ENCODE measurements at regions of chr14 and their contacts with region 1.

Region 1: DNA sequence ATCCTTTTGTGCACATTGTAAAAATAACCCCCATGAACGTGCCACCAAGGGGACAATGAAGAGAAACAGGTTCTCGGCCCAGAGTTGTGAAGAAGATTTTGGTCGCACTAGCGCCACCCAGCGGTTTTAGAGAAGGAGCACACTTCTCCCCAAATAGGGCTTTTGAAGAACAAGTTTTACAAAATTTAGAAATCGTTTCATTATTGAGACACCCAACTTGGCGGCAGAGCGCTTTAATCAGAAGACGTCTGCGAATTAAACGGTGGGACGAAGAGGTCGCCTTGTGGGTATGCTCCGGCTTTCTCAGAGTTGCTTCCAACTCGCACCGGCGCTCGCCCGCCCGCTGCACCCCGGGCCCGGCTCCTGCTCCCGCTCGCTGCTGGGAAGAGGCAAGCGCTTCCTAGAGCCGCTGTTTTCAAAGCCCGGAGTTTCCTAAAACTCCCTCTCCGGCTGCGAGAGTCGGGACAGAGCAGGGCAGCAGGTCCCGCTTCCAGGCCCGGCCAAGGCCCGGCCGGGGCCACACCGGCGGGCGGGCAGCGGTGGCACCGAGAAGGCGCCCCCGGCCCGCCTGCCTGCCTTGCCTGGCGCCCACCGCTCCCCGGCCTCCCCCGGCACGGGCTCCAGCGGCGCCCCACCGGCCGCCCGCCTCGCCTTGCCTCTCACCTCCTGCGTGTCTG is 673 bp downstream of the FOXA1 start:
- DNase-seq: peak; percentile 91
- H3K4me3 ChIP-seq: peak overlapping the region; percentile 54
- H3K27ac ChIP-seq: peak overlapping the region; percentile 91
- H3K4me1 ChIP-seq: no peaks in the 10 kb centered on the region
- H3K27me3 ChIP-seq: peaks cover 33% of the 10 kb centered on the region
- CTCF ChIP-seq: peak; percentile 70

Region 2: GRCh38 chr14:37246427-37246914 is 347.9 kb before region 1 on chr14:
- intact Hi-C with region 1: loop called (anchors 5 kb)
- DNase-seq: no peak
- H3K4me3 ChIP-seq: no peak overlapping the region
- H3K27ac ChIP-seq: no peak overlapping the region
- H3K4me1 ChIP-seq: no peaks in the 10 kb centered on the region
- H3K27me3 ChIP-seq: no peaks in the 10 kb centered on the region
- CTCF ChIP-seq: peak; percentile 75

Region 3: DNA sequence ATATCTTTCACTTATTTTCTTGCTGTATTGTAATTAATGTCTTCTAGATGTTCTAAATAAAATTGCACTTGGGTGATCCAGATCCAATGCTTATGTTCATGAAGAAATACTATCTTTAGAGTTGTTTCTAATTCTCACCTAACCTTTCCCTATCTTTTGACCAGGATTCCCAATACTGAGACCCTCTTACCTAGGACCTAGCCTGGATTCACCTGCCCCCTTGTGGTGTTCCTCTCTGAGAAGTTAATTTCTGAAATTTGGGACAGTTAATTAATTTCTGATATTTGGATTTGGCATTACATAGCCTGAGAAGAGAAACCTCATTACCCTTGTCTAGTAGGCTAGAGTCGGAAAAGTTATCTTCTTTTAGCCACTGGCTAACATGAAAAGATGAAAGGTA is 28.8 kb before region 1 on chr14:
- intact Hi-C with region 1: loop called (anchors 2 kb)
- DNase-seq: no peak
- H3K4me3 ChIP-seq: no peak overlapping the region
- H3K27ac ChIP-seq: peak overlapping the region; percentile 80
- H3K4me1 ChIP-seq: peaks cover 5% of the 10 kb centered on the region
- H3K27me3 ChIP-seq: no peaks in the 10 kb centered on the region
- CTCF ChIP-seq: no peak

Measured in colonic mucosa (tissue), 4 donors.